Psoas muscle (tissue), 8 donors: ENCODE measurements at regions of chr4 and their contacts with region 1.

Region 1: GRCh38 chr4:78268597-78268996 is 211.5 kb downstream of the FRAS1 start:
- DNase-seq: no peak
- ATAC-seq: peak in 1 of 4 donors; percentile 41
- H3K4me3 ChIP-seq: no peak overlapping the region
- H3K27ac ChIP-seq: no peak overlapping the region
- H3K4me1 ChIP-seq: peaks cover 6% of the 10 kb centered on the region
- H3K27me3 ChIP-seq: no peaks in the 10 kb centered on the region
- CTCF ChIP-seq: no peak

Region 2: DNA sequence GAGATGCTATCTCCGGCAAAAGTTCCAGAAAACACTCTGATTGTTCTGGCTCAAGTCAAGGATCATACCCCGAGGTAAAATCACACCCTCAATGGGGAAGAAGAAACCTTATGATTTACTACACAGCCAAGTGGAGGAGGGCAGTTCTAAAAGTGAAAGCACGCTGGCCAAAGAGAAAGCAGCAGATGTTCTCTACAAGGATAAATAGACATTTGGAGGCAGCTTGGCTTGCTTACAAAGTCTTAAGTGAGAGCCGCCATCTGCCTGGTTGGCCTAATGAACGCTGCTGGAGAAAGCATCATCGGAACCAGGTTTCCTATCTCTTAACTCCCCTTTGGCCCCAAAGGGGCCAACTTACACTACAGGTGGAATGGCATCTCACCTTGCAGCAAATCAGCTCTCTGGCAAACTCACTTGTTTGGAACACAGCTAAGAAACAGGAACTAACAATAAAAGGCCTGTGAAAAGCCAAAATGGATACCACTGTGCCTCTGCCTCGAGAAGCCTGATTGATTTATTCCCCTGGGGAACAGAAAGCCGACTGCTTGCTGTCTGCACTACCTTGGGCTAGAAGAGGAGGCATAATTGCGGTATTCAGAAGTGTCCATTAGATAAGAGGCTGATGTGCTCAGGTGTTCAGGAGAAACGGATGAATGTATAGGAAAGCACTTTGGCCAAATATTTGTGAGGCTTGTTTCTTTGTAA is 188.7 kb before region 1 on chr4:
- intact Hi-C with region 1: loop called in 1 of 2 experiments (anchors 10 kb)
- DNase-seq: no peak
- ATAC-seq: peak in 3 of 4 donors; percentile 27 to 72 (median 32)
- H3K4me3 ChIP-seq: peak overlapping the region; percentile 43
- H3K27ac ChIP-seq: peak overlapping the region; percentile 5
- H3K4me1 ChIP-seq: no peaks in the 10 kb centered on the region
- H3K27me3 ChIP-seq: no peaks in the 10 kb centered on the region
- CTCF ChIP-seq: no peak

Region 3: GRCh38 chr4:78149751-78150542 is 118.7 kb before region 1 on chr4:
- intact Hi-C with region 1: no loop called
- DNase-seq: no peak
- ATAC-seq: no peak
- H3K4me3 ChIP-seq: no peak overlapping the region
- H3K27ac ChIP-seq: no peak overlapping the region
- H3K4me1 ChIP-seq: no peaks in the 10 kb centered on the region
- H3K27me3 ChIP-seq: no peaks in the 10 kb centered on the region
- CTCF ChIP-seq: no peak

Region 4: DNA sequence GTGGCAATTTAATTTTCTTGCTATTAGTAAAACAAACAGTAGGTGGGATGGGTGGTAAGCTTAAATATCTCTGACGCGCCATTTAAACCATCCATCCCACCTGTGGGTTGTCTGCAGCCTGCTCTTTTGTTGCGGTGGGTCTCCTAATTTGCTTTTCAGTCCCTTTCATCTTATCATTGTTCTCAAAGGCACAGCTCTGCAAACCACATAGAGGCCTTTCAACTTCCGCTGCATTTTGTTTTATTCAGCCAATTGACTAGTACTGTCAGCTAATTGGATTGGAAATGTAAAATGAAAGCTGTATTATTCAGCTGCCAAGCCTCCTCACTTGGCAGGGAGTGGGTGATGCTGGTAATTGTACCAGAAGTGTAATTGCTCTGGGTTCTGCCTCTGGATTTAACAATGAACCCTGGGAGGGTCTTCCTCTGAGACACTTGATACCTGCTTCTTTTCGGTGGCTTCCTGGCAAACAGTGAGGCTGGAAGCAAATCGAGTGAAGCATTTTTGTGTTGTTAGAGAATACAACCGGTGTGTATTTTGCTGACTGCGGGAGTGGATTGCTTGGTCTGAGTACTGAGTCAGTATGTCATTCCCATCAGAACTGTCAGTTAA is 45.9 kb before region 1 on chr4:
- intact Hi-C with region 1: no loop called
- DNase-seq: no peak
- ATAC-seq: no peak
- H3K4me3 ChIP-seq: no peak overlapping the region
- H3K27ac ChIP-seq: no peak overlapping the region
- H3K4me1 ChIP-seq: no peaks in the 10 kb centered on the region
- H3K27me3 ChIP-seq: no peaks in the 10 kb centered on the region
- CTCF ChIP-seq: no peak

Region 5: GRCh38 chr4:78336093-78336943 is 67.7 kb after region 1 on chr4:
- intact Hi-C with region 1: no loop called
- DNase-seq: no peak
- ATAC-seq: no peak
- H3K4me3 ChIP-seq: no peak overlapping the region
- H3K27ac ChIP-seq: no peak overlapping the region
- H3K4me1 ChIP-seq: no peaks in the 10 kb centered on the region
- H3K27me3 ChIP-seq: no peaks in the 10 kb centered on the region
- CTCF ChIP-seq: no peak